ENCODE measurements at regions of chr4 and their contacts with region 1.

Region 1: GRCh38 chr4:109424093-109424841 is 9.3 kb upstream of the SEC24B start:
- DNase-seq: no peak
- H3K4me3 Mint-ChIP-seq: no peak overlapping the region
- H3K27ac Mint-ChIP-seq: no peak overlapping the region
- H3K4me1 Mint-ChIP-seq: peaks cover 14% of the 10 kb centered on the region
- H3K27me3 Mint-ChIP-seq: no peaks in the 10 kb centered on the region

Region 2: GRCh38 chr4:109125084-109125483 is 299.2 kb before region 1 on chr4:
- CTCF ChIA-PET with region 1: no interaction called
- intact Hi-C with region 1: no loop called
- DNase-seq: no peak
- H3K4me3 Mint-ChIP-seq: no peak overlapping the region
- H3K27ac Mint-ChIP-seq: no peak overlapping the region
- H3K4me1 Mint-ChIP-seq: no peaks in the 10 kb centered on the region
- H3K27me3 Mint-ChIP-seq: peaks cover 2% of the 10 kb centered on the region

Region 3: GRCh38 chr4:109658871-109659410 is 234.7 kb after region 1 on chr4:
- CTCF ChIA-PET with region 1: interaction called, 4 read pairs
- intact Hi-C with region 1: loop called (anchors 1 kb)
- DNase-seq: peak; percentile 63
- H3K4me3 Mint-ChIP-seq: no peak overlapping the region
- H3K27ac Mint-ChIP-seq: no peak overlapping the region
- H3K4me1 Mint-ChIP-seq: peaks cover 46% of the 10 kb centered on the region
- H3K27me3 Mint-ChIP-seq: no peaks in the 10 kb centered on the region

Region 4: GRCh38 chr4:109803924-109804571 is 379.8 kb after region 1 on chr4:
- CTCF ChIA-PET with region 1: interaction called, 9 read pairs
- intact Hi-C with region 1: loop called (anchors 1 kb)
- DNase-seq: peak; percentile 45
- H3K4me3 Mint-ChIP-seq: no peak overlapping the region
- H3K27ac Mint-ChIP-seq: no peak overlapping the region
- H3K4me1 Mint-ChIP-seq: no peaks in the 10 kb centered on the region
- H3K27me3 Mint-ChIP-seq: peaks cover 4% of the 10 kb centered on the region

Region 5: DNA sequence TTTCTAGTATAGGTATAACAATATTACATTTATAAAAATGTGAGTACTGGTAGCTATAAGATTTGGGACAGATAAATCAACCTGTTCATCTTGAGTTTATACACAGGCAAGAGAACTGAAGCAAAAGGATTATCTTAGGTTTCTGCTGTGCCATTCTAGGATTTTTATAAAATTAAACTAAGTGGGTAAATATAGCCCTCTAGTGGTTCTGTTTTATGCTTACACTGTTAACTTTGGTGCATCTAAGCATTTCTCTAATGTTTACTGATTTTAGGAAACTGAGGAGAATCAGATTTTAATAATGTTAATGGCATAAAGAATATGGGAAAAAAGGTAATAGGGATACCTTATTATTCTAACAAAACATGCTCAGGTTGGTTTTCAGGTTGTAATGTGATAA is 402.5 kb after region 1 on chr4:
- CTCF ChIA-PET with region 1: interaction called, 4 read pairs
- intact Hi-C with region 1: loop called (anchors 1 kb)
- DNase-seq: no peak
- H3K4me3 Mint-ChIP-seq: no peak overlapping the region
- H3K27ac Mint-ChIP-seq: no peak overlapping the region
- H3K4me1 Mint-ChIP-seq: peaks cover 5% of the 10 kb centered on the region
- H3K27me3 Mint-ChIP-seq: no peaks in the 10 kb centered on the region

Region 6: GRCh38 chr4:109977854-109978501 is 553.7 kb after region 1 on chr4:
- CTCF ChIA-PET with region 1: interaction called, 8 read pairs
- intact Hi-C with region 1: loop called (anchors 1 kb)
- DNase-seq: peak; percentile 13
- H3K4me3 Mint-ChIP-seq: no peak overlapping the region
- H3K27ac Mint-ChIP-seq: no peak overlapping the region
- H3K4me1 Mint-ChIP-seq: no peaks in the 10 kb centered on the region
- H3K27me3 Mint-ChIP-seq: peaks cover 7% of the 10 kb centered on the region

Region 7: GRCh38 chr4:109998867-109999584 is 574.8 kb after region 1 on chr4:
- CTCF ChIA-PET with region 1: interaction called, 3 read pairs
- intact Hi-C with region 1: loop called (anchors 5 kb)
- DNase-seq: peak; percentile 17
- H3K4me3 Mint-ChIP-seq: no peak overlapping the region
- H3K27ac Mint-ChIP-seq: no peak overlapping the region
- H3K4me1 Mint-ChIP-seq: peaks cover 8% of the 10 kb centered on the region
- H3K27me3 Mint-ChIP-seq: peaks cover 10% of the 10 kb centered on the region

Region 8: GRCh38 chr4:110510955-110511544 is 1086.8 kb after region 1 on chr4:
- CTCF ChIA-PET with region 1: no interaction called
- intact Hi-C with region 1: loop called (anchors 2 kb)
- DNase-seq: no peak
- H3K4me3 Mint-ChIP-seq: no peak overlapping the region
- H3K27ac Mint-ChIP-seq: no peak overlapping the region
- H3K4me1 Mint-ChIP-seq: peaks cover 9% of the 10 kb centered on the region
- H3K27me3 Mint-ChIP-seq: no peaks in the 10 kb centered on the region

Measured in activated naive CD4-positive, alpha-beta T cell treated with anti-CD3 and anti-CD28 coated beads for 36 hours (primary cell).